ENCODE measurements at regions of chr17 and their contacts with region 1.

Region 1: DNA sequence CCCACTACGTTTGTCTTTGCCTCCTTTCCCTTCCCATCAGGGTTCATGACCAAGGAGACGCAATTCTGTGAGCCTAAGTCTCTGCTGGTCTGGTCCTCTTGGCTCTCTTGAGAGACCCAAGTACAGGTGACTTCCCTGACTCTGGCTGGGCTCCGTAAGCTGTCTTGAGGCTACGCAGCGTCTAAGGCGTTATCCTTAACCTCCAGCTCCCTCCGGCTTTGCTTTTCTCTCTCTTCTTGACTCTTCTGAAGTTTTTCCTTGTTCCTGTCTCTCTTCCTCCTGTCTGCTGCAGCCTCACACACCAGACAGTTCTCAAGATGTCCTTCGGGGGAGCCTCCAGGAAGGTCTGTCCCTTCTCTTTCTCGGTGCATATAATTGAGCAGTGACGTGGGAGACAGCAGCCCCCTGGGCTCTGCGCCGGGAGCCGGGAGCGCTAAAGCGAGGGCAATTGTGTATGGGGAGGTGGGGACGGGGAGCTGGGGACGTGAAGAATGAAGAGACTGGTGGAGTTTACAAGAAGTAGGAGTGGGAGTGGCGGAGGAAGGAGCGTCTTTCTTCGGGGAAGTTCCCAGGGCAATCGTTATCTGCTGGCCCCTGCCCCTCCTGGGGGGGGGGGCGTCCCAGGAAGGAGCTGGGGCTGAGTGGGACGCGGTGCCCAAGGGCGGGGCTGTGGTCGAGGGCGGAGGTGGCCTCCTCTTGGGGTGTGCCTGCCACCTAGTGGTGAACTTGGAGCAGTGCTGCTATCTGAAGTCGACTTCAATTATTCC is 6.9 kb upstream of the PIRT start:
- DNase-seq: peak; percentile 71 to 84 (median 77)
- ATAC-seq: peak; percentile 96
- H3K4me3 ChIP-seq: no peak overlapping the region
- H3K27ac ChIP-seq: no peak overlapping the region
- H3K4me1 ChIP-seq: peaks cover 0 to 4% of the 10 kb centered on the region in 2 experiments; a peak in 2 of 5 replicates
- H3K27me3 ChIP-seq: no peaks in the 10 kb centered on the region
- CTCF ChIP-seq: peak; percentile 70 to 79 (median 75)
- EP300 ChIP-seq: no peak
- POLR2A ChIP-seq: no peak
- RAD21 ChIP-seq: peak; percentile 62 to 78

Region 2: GRCh38 chr17:10646392-10646990 is 198.3 kb before region 1 on chr17:
- CTCF ChIA-PET with region 1: interaction called, 7 read pairs
- POLR2A ChIA-PET with region 1: interaction called, 3 read pairs
- in situ Hi-C with region 1: loop called (anchors 10 kb)
- intact Hi-C with region 1: loop called (anchors 1 kb)
- DNase-seq: peak; percentile 33 to 67 (median 46)
- ATAC-seq: peak; percentile 86
- H3K4me3 ChIP-seq: no peak overlapping the region
- H3K27ac ChIP-seq: no peak overlapping the region
- H3K4me1 ChIP-seq: no peaks in the 10 kb centered on the region; a peak in 1 of 5 replicates
- H3K27me3 ChIP-seq: no peaks in the 10 kb centered on the region; a peak in 2 of 5 replicates
- CTCF ChIP-seq: peak; percentile 69
- EP300 ChIP-seq: no peak
- POLR2A ChIP-seq: no peak
- RAD21 ChIP-seq: peak; percentile 23 to 58; a peak in 2 of 4 replicates

Region 3: DNA sequence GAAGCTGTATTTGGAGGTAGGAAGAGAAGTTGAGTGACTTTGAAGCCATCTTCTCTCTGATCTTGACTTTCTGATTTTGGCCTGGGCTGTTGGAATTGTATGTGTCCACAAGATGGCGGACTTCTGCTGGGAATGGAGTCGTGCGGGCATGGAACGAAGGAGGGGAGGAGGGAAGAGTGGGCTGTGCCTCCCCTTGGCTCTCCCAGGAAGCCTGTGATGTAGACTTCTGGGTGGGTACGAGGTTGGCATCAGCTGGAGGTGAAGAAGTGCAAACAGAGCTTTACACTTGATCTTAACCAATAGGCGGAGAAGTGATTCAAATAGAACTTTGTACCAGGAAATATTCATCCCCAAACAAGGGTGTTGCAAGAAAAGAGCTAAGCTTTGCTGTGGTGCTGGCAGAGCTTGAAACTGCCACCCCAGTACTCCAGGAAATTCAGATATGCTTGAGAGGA is 107.6 kb before region 1 on chr17:
- CTCF ChIA-PET with region 1: interaction called, 5 read pairs
- POLR2A ChIA-PET with region 1: no interaction called
- in situ Hi-C with region 1: no loop called
- intact Hi-C with region 1: loop called (anchors 1 kb)
- DNase-seq: peak; percentile 35 to 51 (median 38)
- ATAC-seq: peak; percentile 80
- H3K4me3 ChIP-seq: no peak overlapping the region
- H3K27ac ChIP-seq: no peak overlapping the region
- H3K4me1 ChIP-seq: no peaks in the 10 kb centered on the region
- H3K27me3 ChIP-seq: peaks cover 0 to 6% of the 10 kb centered on the region in 2 experiments; a peak in 2 of 5 replicates
- CTCF ChIP-seq: peak; percentile 61 to 70 (median 67)
- EP300 ChIP-seq: no peak
- POLR2A ChIP-seq: no peak
- RAD21 ChIP-seq: peak; percentile 35 to 70; a peak in 3 of 4 replicates

Region 4: GRCh38 chr17:10870336-10871050 is 25.7 kb after region 1 on chr17:
- CTCF ChIA-PET with region 1: no interaction called
- POLR2A ChIA-PET with region 1: no interaction called
- in situ Hi-C with region 1: no loop called
- intact Hi-C with region 1: no loop called
- DNase-seq: no peak
- ATAC-seq: no peak
- H3K4me3 ChIP-seq: no peak overlapping the region
- H3K27ac ChIP-seq: no peak overlapping the region
- H3K4me1 ChIP-seq: no peaks in the 10 kb centered on the region
- H3K27me3 ChIP-seq: no peaks in the 10 kb centered on the region
- CTCF ChIP-seq: no peak
- EP300 ChIP-seq: no peak
- POLR2A ChIP-seq: no peak
- RAD21 ChIP-seq: no peak

Measured in K562 (cell line).